ENCODE measurements at regions of chr7 and their contacts with region 1.

Region 1: GRCh38 chr7:73660001-73660400 is 7.6 kb upstream of the VPS37D start:
- DNase-seq: no peak
- ATAC-seq: no peak
- H3K4me3 ChIP-seq: no peak overlapping the region
- H3K27ac ChIP-seq: no peak overlapping the region
- H3K4me1 ChIP-seq: no peaks in the 10 kb centered on the region
- H3K27me3 ChIP-seq: no peaks in the 10 kb centered on the region
- CTCF ChIP-seq: no peak
- POLR2A ChIP-seq: no peak

Region 2: GRCh38 chr7:73726083-73726466 is 66.1 kb after region 1 on chr7:
- intact Hi-C with region 1: loop called in 2 of 10 experiments (anchors 5 kb)
- DNase-seq: no peak
- ATAC-seq: no peak
- H3K4me3 ChIP-seq: no peak overlapping the region
- H3K27ac ChIP-seq: no peak overlapping the region
- H3K4me1 ChIP-seq: peaks cover 0 to 7% (median 0%) of the 10 kb centered on the region in 12 donors
- H3K27me3 ChIP-seq: peaks cover 0 to 24% (median 3%) of the 10 kb centered on the region in 9 donors
- CTCF ChIP-seq: peak in 2 of 12 donors; percentile 3 to 9
- POLR2A ChIP-seq: no peak

Measured in heart left ventricle (tissue), 16 donors.